SK-N-SH (cell line): ENCODE measurements at regions of chr17 and their contacts with region 1.

Region 1: GRCh38 chr17:40909351-40909750 is 24.3 kb upstream of the KRT20 start:
- DNase-seq: peak; percentile 75
- H3K4me3 ChIP-seq: no peak overlapping the region; a peak in 1 of 4 replicates
- H3K27ac ChIP-seq: peak overlapping the region in 1 of 2 experiments; percentile 66; a peak in 2 of 4 replicates
- H3K4me1 ChIP-seq: peaks cover 0 to 14% of the 10 kb centered on the region in 2 experiments; a peak in 3 of 4 replicates
- H3K27me3 ChIP-seq: peaks cover 20% of the 10 kb centered on the region; the same call in 1 of the 2 replicates
- CTCF ChIP-seq: peak; percentile 84
- EP300 ChIP-seq: peak in 1 of 2 experiments; percentile 27; a peak in 1 of 4 replicates
- RAD21 ChIP-seq: peak; percentile 92

Region 2: DNA sequence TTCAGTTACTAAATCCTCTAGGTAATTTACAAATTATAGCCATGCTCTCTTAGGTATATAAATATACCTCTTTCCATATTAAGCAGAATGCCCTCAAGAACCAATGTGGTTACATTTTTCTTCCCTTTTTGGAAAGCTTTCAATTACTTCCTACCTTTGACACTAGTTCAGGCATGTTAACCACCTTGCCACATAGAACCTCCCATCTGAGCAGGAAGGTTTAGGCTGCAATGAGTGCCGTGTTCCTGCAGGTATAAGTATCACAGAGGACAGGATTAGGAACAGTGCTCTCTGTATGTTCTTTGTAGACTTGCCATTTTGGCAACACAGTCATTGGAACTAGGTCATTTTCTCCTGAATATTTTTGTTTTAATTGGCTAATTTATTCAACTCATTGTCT is 174.3 kb before region 1 on chr17:
- CTCF ChIA-PET with region 1: no interaction called
- POLR2A ChIA-PET with region 1: no interaction called
- DNase-seq: no peak
- H3K4me3 ChIP-seq: no peak overlapping the region
- H3K27ac ChIP-seq: no peak overlapping the region
- H3K4me1 ChIP-seq: no peaks in the 10 kb centered on the region
- H3K27me3 ChIP-seq: peaks cover 54% of the 10 kb centered on the region; the same call in 1 of the 2 replicates
- CTCF ChIP-seq: no peak
- EP300 ChIP-seq: no peak
- RAD21 ChIP-seq: no peak

Region 3: DNA sequence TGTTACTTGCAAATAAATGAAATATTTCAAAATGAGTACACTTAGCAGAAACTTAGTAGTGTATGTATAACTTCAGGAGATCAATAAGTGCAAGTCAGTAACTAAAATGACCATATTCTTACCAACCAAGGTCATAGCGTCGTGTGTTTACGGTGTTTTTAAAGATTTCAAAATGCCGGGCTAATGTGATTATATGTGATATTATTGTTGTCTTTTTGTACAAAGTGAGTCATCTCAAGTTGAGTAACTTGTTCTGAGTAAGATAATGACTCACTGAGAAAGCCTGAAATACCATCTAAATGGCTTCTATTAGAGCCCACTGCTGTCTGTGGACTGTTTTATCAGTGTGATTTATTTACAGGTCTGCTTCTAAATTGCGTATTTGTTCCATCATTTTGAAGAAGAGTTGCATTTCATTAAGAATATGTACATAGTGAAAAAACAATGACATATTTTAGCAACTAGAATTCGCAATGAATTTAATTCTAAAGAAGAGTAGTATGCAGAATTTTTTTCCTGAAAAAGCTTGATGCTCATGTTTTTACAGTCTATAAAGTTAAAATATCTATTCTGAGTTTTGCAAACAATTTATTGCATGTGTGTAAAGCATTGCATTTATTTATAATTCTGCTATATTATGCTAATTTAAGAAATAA is 55.1 kb before region 1 on chr17:
- CTCF ChIA-PET with region 1: interaction called, 15 read pairs
- POLR2A ChIA-PET with region 1: no interaction called
- DNase-seq: no peak
- H3K4me3 ChIP-seq: no peak overlapping the region
- H3K27ac ChIP-seq: peak overlapping the region in 1 of 2 experiments; percentile 48; a peak in 2 of 4 replicates
- H3K4me1 ChIP-seq: peaks cover 6 to 8% of the 10 kb centered on the region in 2 experiments; a peak in 2 of 4 replicates
- H3K27me3 ChIP-seq: no peaks in the 10 kb centered on the region
- CTCF ChIP-seq: no peak
- EP300 ChIP-seq: peak in 1 of 2 experiments; percentile 62; a peak in 1 of 4 replicates
- RAD21 ChIP-seq: no peak